ENCODE measurements at regions of chr1 and their contacts with region 1.

Region 1: GRCh38 chr1:117051224-117052064 is 8.7 kb upstream of the TTF2 start:
- DNase-seq: peak in 1 of 4 donors; percentile 24
- ATAC-seq: peak; percentile 45
- H3K4me3 ChIP-seq: no peak overlapping the region
- H3K27ac ChIP-seq: peak overlapping the region in 2 of 4 donors; percentile 19 to 44
- H3K4me1 ChIP-seq: peaks cover 5% of the 10 kb centered on the region
- H3K27me3 ChIP-seq: no peaks in the 10 kb centered on the region
- CTCF ChIP-seq: no peak
- POLR2A ChIP-seq: no peak

Region 2: GRCh38 chr1:116724765-116725375 is 326.6 kb before region 1 on chr1:
- intact Hi-C with region 1: loop called (anchors 5 kb)
- DNase-seq: peak; percentile 76 to 80 (median 79)
- ATAC-seq: peak; percentile 60
- H3K4me3 ChIP-seq: no peak overlapping the region
- H3K27ac ChIP-seq: no peak overlapping the region
- H3K4me1 ChIP-seq: no peaks in the 10 kb centered on the region
- H3K27me3 ChIP-seq: no peaks in the 10 kb centered on the region
- CTCF ChIP-seq: peak; percentile 43 to 77 (median 69)
- POLR2A ChIP-seq: no peak

Region 3: GRCh38 chr1:116902032-116902738 is 149.3 kb before region 1 on chr1:
- intact Hi-C with region 1: no loop called
- DNase-seq: no peak
- ATAC-seq: no peak
- H3K4me3 ChIP-seq: no peak overlapping the region
- H3K27ac ChIP-seq: no peak overlapping the region
- H3K4me1 ChIP-seq: no peaks in the 10 kb centered on the region
- H3K27me3 ChIP-seq: no peaks in the 10 kb centered on the region
- CTCF ChIP-seq: no peak
- POLR2A ChIP-seq: no peak

Measured in body of pancreas (tissue), 4 donors.